SK-N-SH (cell line): ENCODE measurements at regions of chr17 and their contacts with region 1.

Region 1: DNA sequence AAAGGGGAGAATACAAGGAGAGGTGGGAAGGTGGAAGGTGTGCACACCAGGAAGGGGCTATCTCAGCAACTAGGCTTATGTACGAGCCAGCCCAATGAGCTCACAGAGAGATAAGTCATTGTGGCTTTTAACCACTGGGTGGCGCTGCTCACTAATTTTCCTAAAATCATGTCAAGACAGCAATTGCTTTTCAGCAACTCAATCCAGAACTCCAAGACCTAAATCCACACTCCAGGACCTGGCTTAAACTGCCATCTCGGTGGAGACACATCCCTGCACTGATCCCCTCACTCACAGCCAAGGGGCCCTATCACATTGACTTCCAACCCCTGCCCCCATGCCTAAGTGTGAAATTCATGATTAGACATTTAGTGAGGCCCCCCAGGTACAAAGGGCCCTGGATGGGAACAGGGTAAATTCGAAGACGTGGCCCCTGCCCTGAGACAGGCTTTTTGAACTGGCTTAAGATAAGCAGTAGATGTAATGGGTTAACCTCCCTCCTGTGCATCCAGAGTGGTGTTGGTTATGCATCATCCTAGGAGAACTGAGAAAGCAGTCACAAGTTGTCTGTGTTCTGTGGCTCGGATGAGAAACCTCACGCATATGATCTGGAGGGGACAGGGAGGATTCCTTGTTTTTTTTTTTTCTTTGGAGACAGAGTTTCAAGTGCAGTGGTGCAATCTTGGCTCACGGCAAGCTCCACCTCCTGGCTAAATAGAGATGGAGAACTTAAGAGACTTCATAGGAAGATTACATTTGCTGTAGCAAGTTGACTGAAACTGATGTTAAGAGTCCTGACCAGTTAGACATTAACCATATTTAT is 11.5 kb downstream of the CCL16 start:
- DNase-seq: peak; percentile 60
- H3K4me3 ChIP-seq: no peak overlapping the region
- H3K27ac ChIP-seq: no peak overlapping the region
- H3K4me1 ChIP-seq: no peaks in the 10 kb centered on the region
- H3K27me3 ChIP-seq: peaks cover 30% of the 10 kb centered on the region; the same call in 1 of the 2 replicates
- CTCF ChIP-seq: peak; percentile 81
- EP300 ChIP-seq: no peak
- RAD21 ChIP-seq: peak; percentile 87

Region 2: GRCh38 chr17:35953720-35954119 is 16.0 kb before region 1 on chr17:
- CTCF ChIA-PET with region 1: interaction called, 20 read pairs
- POLR2A ChIA-PET with region 1: interaction called, 3 read pairs
- DNase-seq: no peak
- H3K4me3 ChIP-seq: no peak overlapping the region
- H3K27ac ChIP-seq: no peak overlapping the region
- H3K4me1 ChIP-seq: no peaks in the 10 kb centered on the region
- H3K27me3 ChIP-seq: peaks cover 43% of the 10 kb centered on the region; the same call in 1 of the 2 replicates
- CTCF ChIP-seq: no peak
- EP300 ChIP-seq: no peak
- RAD21 ChIP-seq: no peak

Region 3: DNA sequence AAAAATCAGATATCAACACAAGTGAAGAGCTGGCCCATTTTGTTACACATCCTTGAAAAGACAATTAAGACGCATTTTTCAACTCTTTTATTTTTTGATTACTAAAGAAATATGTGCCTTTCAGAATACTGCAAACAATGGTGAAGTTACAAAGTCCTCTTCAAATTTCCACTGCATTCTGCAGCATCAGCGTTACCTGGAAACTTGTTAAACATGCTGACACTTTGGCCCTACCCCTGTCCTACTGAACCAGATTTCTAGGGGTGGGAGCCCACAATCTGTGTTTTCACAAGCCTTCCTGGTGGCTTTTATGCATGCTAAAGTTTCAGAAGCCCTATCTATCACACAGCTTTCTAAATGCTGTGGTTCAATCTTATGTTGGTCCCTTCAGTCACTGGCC is 21.3 kb after region 1 on chr17:
- CTCF ChIA-PET with region 1: interaction called, 10 read pairs
- POLR2A ChIA-PET with region 1: no interaction called
- DNase-seq: no peak
- H3K4me3 ChIP-seq: no peak overlapping the region
- H3K27ac ChIP-seq: no peak overlapping the region
- H3K4me1 ChIP-seq: no peaks in the 10 kb centered on the region
- H3K27me3 ChIP-seq: peaks cover 6% of the 10 kb centered on the region; the same call in 1 of the 2 replicates
- CTCF ChIP-seq: no peak
- EP300 ChIP-seq: no peak
- RAD21 ChIP-seq: no peak

Region 4: GRCh38 chr17:36072431-36073121 is 102.8 kb after region 1 on chr17:
- CTCF ChIA-PET with region 1: interaction called, 18 read pairs
- POLR2A ChIA-PET with region 1: no interaction called
- DNase-seq: peak; percentile 62
- H3K4me3 ChIP-seq: no peak overlapping the region
- H3K27ac ChIP-seq: no peak overlapping the region
- H3K4me1 ChIP-seq: no peaks in the 10 kb centered on the region
- H3K27me3 ChIP-seq: no peaks in the 10 kb centered on the region; the same call in 1 of the 2 replicates
- CTCF ChIP-seq: peak; percentile 72
- EP300 ChIP-seq: no peak
- RAD21 ChIP-seq: peak; percentile 46

Region 5: DNA sequence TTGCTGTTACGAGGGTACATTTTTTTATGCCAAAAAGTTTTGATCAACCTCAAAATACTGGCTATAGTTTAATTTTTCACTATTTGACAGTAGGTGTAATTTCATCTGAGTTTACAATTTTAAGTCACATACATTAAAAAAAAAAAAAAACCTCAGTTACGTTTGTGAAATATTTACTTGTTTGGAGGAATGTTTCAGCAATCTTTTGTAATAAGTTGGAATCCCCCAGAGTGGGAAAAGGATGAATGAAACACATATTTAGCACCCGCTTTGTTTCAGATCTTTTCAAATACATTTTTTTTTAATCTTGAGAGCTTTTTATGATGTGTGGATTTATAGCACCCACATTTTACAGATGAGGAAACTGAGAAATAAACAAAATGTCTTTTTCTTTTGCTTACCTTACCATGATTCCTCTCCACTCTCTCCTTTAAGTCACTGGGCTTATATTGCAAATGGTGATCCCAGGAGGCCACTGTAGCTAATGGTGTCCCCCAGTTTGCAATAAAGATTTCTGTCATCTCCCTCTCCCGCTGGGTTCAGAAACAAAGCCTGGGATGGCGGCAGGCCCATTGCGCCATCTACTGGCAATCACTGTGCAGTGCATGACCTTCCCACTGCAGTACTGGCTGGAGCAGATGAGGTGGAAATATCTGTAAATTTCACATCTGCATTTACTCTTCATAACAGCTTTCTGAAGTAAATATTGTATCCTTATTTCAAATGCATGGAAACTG is 179.0 kb after region 1 on chr17:
- CTCF ChIA-PET with region 1: interaction called, 59 read pairs
- POLR2A ChIA-PET with region 1: no interaction called
- DNase-seq: peak; percentile 77
- H3K4me3 ChIP-seq: peak overlapping the region in 1 of 2 experiments; percentile 23; a peak in 1 of 4 replicates
- H3K27ac ChIP-seq: no peak overlapping the region
- H3K4me1 ChIP-seq: no peaks in the 10 kb centered on the region
- H3K27me3 ChIP-seq: peaks cover 14% of the 10 kb centered on the region; the same call in 1 of the 2 replicates
- CTCF ChIP-seq: peak; percentile 98
- EP300 ChIP-seq: no peak
- RAD21 ChIP-seq: peak; percentile 81

Region 6: DNA sequence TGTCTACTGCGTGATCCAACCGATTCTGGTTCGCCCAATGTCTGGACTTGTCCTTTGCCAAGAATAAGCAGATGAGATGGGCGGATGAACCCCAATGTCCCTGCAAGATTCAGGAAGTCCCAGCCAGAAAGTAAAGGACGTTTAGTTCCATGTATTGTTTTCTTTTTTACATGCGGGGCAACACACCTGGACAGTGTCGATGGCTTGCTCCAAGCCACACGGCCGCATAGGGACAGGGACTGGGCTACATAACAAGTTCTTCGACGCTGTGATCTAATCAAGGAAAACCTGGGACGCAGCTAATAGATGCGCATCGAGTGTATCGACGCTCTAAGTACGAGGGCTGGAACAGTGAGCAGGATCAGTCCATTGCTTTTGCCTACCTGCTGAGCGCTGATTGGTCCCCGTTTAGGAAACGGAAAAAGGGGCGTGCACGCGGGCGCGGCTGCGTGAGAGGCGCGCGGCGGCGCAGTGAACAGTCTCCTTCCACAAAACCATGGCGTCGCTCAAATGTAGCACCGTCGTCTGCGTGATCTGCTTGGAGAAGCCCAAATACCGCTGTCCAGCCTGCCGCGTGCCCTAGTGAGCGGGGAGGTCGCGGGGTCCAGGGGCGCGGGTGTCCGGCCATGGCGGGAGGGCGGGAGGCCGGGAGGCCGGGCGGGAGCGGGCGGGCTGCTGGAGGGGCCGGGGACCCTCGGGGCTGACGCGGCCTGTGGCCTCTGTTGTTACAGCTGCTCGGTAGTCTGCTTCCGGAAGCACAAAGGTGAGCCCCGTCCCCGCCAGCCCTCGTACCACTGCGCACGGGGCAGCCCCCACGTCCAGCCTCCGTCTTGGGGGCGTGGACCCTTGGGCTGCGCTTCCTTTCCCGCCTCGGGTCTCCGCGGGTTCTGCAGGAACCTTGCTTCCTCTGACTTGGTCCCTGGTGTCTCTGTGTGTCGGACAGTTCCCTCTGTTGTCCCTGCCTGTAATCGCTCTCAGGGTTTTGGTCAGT is 516.7 kb after region 1 on chr17 and contains the start of gene ZNHIT3:
- CTCF ChIA-PET with region 1: interaction called, 13 read pairs
- POLR2A ChIA-PET with region 1: no interaction called
- DNase-seq: peak; percentile 95
- H3K4me3 ChIP-seq: peak within 1 kb of the TSS; percentile 75 to 99
- H3K27ac ChIP-seq: peak within 1 kb of the TSS; percentile 38 to 62; a peak in 3 of 4 replicates
- H3K4me1 ChIP-seq: peaks cover 0 to 24% of the 10 kb centered on the region in 2 experiments; a peak in 2 of 4 replicates
- H3K27me3 ChIP-seq: peaks cover 11% of the 10 kb centered on the region; the same call in 1 of the 2 replicates
- CTCF ChIP-seq: no peak
- EP300 ChIP-seq: no peak
- RAD21 ChIP-seq: no peak
- polyA plus RNA-seq, gene ZNHIT3: 59.9 and 68.5 TPM in 2 replicates